Caco-2 (cell line): ENCODE measurements at regions of chr7 and their contacts with region 1.

Region 1: DNA sequence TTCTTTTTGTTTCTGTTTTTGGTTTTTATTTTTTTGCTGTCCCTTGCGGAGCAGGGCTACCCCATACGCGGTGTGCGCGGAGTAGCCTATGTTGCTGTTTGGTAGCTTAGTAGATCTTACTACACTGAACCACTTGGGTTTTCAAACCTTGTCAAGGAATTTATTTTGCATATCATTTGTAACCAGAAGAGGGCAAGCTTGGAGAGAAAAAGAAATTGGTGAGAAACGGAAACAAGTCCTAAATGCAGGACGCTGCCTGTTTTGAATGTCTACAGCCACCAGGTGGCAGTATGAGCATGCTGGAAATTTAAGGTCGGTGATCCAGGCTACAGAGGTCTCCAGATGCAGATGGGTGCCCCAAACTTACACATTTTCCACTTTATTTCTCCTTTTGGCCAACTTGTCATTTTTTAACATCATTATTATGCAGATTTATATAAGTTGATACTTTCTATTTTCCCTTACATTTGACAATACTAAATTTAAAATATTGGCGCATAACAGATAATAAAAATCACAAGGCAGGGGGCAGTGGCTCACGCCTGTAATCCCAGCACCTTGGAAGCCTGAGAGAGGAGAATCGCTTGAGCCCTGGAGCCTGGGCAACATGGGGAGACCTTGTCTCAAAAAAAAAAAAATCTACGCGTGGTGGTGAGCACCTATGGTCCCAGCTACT is 15.3 kb upstream of the TRA2A start:
- DNase-seq: peak; percentile 86 to 87
- H3K4me3 ChIP-seq: no peak overlapping the region
- H3K4me3 Mint-ChIP-seq: no peak overlapping the region
- H3K27ac Mint-ChIP-seq: no peak overlapping the region
- H3K4me1 ChIP-seq: no peaks in the 10 kb centered on the region
- H3K4me1 Mint-ChIP-seq: peaks cover 12% of the 10 kb centered on the region
- H3K27me3 ChIP-seq: no peaks in the 10 kb centered on the region
- H3K27me3 Mint-ChIP-seq: peaks cover 2% of the 10 kb centered on the region
- CTCF ChIP-seq: peak; percentile 93 to 96

Region 2: DNA sequence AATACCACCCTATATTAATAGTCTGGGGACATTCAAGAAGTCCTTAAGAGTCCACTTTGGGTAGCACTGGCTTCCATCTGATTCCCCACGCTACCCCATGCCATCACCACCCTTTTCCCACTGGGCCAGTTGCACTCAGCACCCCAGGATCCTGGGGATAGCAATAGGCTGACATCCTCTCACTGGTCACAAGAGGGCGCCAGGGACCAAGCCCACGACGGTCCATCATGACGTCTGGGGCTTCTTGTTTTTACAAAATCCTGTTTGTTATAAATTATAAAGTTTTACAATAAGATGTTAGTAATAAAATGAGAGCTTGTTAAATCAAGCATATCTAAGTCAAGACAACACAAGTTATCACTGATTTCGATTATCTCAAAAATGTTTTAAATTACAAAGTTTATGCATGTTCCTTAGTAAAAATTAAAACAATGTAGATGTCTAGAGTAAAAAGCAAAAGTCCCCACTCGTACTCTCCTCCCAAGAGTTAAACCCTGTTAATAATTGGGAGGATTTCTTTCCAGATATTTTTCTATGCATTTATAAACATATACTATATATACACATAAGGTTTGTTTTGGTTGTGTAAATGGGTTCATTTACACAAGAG is 285.1 kb before region 1 on chr7:
- CTCF ChIA-PET with region 1: interaction called, 8 read pairs
- POLR2A ChIA-PET with region 1: no interaction called
- intact Hi-C with region 1: loop called (anchors 1 kb)
- DNase-seq: peak; percentile 62 to 77
- H3K4me3 ChIP-seq: no peak overlapping the region
- H3K4me3 Mint-ChIP-seq: no peak overlapping the region
- H3K27ac Mint-ChIP-seq: no peak overlapping the region
- H3K4me1 ChIP-seq: no peaks in the 10 kb centered on the region
- H3K4me1 Mint-ChIP-seq: peaks cover 7% of the 10 kb centered on the region
- H3K27me3 ChIP-seq: no peaks in the 10 kb centered on the region
- H3K27me3 Mint-ChIP-seq: no peaks in the 10 kb centered on the region
- CTCF ChIP-seq: peak; percentile 85 to 93

Region 3: DNA sequence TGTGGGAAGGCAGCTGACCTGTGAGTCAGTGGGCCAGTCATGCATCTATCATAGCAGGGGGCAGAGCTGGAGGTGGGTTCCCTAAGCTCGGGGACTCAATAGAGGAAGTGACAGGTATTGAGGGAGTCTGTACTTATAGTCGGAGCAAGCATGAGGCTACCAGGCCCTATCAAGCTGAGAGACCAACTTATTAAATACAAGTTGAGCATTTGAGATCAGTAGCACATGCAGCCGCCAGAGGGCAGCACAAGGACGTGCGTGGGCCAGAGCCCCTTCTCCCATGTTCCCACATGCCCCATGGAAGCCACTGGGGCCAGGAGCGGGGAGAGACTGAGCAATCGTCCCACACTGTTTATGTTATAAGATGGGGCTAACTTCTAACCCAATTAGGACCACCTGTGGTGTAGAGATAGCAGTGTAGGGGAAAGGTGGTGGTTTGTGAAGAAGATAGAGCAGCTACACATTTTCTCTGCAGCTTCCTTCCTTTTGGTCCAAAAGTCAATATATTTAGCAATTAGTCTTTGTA is 149.9 kb after region 1 on chr7:
- CTCF ChIA-PET with region 1: interaction called, 3 read pairs
- POLR2A ChIA-PET with region 1: no interaction called
- intact Hi-C with region 1: loop called (anchors 1 kb)
- DNase-seq: peak; percentile 81 to 82
- H3K4me3 ChIP-seq: no peak overlapping the region
- H3K4me3 Mint-ChIP-seq: no peak overlapping the region
- H3K27ac Mint-ChIP-seq: peak overlapping the region; percentile 26
- H3K4me1 ChIP-seq: peaks cover 4% of the 10 kb centered on the region; the same call in 1 of the 2 replicates
- H3K4me1 Mint-ChIP-seq: peaks cover 8% of the 10 kb centered on the region
- H3K27me3 ChIP-seq: no peaks in the 10 kb centered on the region
- H3K27me3 Mint-ChIP-seq: no peaks in the 10 kb centered on the region
- CTCF ChIP-seq: peak; percentile 76 to 82